Activated B cell treated with CpG ODN at 0.5 μM for 24 hours (primary cell): ENCODE measurements at regions of chr10 and their contacts with region 1.

Region 1: DNA sequence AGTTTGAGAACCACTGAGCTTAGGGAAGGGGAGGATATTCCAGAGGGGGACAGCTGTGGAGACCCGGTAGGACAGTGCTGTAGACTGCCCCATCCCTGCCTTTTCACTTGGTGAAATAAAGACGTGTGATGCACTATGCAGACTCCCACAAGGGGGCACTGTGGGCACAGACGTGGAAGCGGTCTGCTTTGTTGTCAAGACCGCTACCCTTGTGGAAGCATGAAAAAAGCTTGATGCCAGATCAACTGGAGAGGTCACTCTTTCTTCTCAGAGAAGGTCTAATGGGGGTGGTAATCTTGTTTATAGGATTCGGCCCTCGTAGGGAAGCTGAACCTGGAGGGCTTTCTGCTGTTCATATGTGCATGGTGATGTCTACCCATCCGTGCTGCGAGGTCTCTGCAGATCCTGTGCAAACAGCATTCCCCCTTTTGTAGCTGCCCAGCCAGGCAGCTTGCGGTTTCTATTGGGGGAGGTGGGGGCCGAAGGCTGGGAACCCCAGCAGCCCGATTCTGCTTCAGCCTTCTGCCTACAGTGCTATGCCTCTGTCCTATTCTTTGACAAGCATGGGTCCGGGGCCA is 13.7 kb downstream of the RPS24 start:
- DNase-seq: peak; percentile 63
- ATAC-seq: peak; percentile 74
- H3K4me3 Mint-ChIP-seq: no peak overlapping the region
- H3K27ac Mint-ChIP-seq: no peak overlapping the region
- H3K4me1 Mint-ChIP-seq: peaks cover 22% of the 10 kb centered on the region
- H3K27me3 Mint-ChIP-seq: no peaks in the 10 kb centered on the region
- CTCF ChIP-seq: peak; percentile 45

Region 2: DNA sequence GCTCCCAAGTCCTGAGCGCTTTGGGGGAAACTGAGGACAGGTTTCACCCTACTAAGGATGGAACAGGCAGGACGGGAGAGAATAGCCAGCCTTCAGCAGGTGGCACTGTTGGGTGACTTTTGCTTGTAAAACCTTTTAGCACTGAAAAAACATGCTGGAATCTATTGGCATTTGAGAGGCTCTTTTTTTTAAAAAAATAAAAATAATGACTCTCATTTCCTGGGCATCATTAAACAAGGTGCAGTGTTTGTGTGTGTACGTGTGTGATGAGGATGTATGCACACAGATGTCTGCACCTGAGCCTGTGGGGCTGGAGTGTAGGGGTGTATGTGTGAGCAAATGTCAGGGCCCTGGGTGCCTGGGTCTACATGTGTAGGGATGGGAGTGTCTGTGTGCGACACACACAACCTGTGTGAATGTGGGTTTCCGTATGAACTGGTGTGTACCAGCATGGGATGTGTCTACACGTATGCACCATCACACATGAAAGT is 164.2 kb after region 1 on chr10:
- CTCF ChIA-PET with region 1: no interaction called
- POLR2A ChIA-PET with region 1: no interaction called
- intact Hi-C with region 1: loop called (anchors 10 kb)
- DNase-seq: no peak
- ATAC-seq: no peak
- H3K4me3 Mint-ChIP-seq: no peak overlapping the region
- H3K27ac Mint-ChIP-seq: no peak overlapping the region
- H3K4me1 Mint-ChIP-seq: no peaks in the 10 kb centered on the region
- H3K27me3 Mint-ChIP-seq: peaks cover 20% of the 10 kb centered on the region
- CTCF ChIP-seq: no peak

Region 3: GRCh38 chr10:78437998-78438906 is 390.8 kb after region 1 on chr10:
- CTCF ChIA-PET with region 1: no interaction called
- POLR2A ChIA-PET with region 1: no interaction called
- intact Hi-C with region 1: loop called (anchors 1 kb)
- DNase-seq: no peak
- ATAC-seq: no peak
- H3K4me3 Mint-ChIP-seq: no peak overlapping the region
- H3K27ac Mint-ChIP-seq: no peak overlapping the region
- H3K4me1 Mint-ChIP-seq: no peaks in the 10 kb centered on the region
- H3K27me3 Mint-ChIP-seq: peaks cover 18% of the 10 kb centered on the region
- CTCF ChIP-seq: no peak

Region 4: DNA sequence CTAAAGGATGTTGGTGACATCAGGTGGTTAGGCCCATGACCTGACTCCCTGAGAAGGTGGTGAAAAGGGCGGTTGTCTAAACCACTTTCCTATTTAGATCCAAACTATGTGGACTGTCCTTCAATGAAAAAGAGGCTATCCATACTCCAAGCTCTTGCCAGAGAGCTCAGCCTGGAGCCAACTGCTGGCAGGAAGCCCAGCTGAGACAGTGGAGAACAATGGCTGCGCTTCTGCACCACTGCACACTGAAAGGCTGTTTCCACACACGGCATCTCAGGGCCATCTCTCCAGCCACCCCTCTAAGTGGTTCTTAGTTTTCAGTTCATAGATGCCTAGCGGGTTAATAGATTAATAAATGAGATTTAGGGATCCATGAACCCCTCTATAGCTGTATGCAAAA is 532.6 kb after region 1 on chr10:
- CTCF ChIA-PET with region 1: no interaction called
- POLR2A ChIA-PET with region 1: no interaction called
- intact Hi-C with region 1: loop called (anchors 2 kb)
- DNase-seq: no peak
- ATAC-seq: no peak
- H3K4me3 Mint-ChIP-seq: no peak overlapping the region
- H3K27ac Mint-ChIP-seq: no peak overlapping the region
- H3K4me1 Mint-ChIP-seq: peaks cover 18% of the 10 kb centered on the region
- H3K27me3 Mint-ChIP-seq: no peaks in the 10 kb centered on the region
- CTCF ChIP-seq: no peak

Region 5: GRCh38 chr10:78657163-78657861 is 609.9 kb after region 1 on chr10:
- CTCF ChIA-PET with region 1: interaction called, 11 read pairs
- POLR2A ChIA-PET with region 1: no interaction called
- intact Hi-C with region 1: loop called (anchors 1 kb)
- DNase-seq: peak; percentile 33
- ATAC-seq: no peak
- H3K4me3 Mint-ChIP-seq: no peak overlapping the region
- H3K27ac Mint-ChIP-seq: no peak overlapping the region
- H3K4me1 Mint-ChIP-seq: peaks cover 16% of the 10 kb centered on the region
- H3K27me3 Mint-ChIP-seq: peaks cover 11% of the 10 kb centered on the region
- CTCF ChIP-seq: no peak

Region 6: DNA sequence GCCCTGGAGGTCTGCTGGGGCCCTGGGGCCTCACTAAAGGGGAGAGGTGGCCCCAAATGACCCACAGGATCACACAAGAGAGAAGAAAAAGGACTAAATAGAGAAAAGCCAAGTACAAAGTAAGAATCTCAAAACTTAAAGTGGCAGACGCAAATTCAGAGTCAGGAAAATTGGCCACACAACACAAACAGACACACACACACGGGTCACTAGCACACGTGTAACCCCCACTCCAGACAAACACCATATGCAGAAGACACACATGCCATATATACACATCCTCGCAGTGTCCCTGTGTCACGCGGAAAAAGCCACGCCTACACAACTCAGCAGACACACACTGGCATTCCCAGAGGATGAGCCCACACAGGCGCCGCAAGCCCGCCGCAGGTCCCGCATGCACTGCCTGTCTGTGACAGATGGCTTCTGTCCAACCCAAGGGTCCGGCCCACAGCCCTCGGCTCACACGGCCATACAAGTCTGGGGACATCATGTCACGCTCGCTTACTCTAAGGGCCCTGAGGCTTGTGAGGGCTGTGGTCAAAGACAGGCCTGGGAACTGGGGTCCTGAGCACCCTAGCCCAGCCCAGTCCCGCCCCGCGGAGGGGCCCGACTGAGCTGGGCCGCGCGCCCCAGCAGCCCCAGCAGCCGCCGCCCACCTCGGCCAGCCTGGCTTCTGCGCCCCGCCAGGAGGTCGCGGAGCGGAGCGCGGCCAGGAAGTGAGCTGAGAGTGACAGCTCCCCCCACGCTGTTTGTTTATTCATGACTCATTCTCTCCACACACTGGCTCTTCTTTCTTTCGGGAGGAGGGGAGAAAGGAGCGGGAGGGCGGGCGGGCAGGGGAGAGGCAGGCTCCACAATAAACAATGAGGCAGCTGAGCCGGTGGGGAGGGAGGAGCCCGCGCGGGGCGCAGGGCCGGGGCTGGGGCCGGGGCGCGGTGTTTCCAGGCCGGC is 925.8 kb after region 1 on chr10:
- CTCF ChIA-PET with region 1: no interaction called
- POLR2A ChIA-PET with region 1: no interaction called
- intact Hi-C with region 1: loop called (anchors 10 kb)
- DNase-seq: peak; percentile 41
- ATAC-seq: peak; percentile 61
- H3K4me3 Mint-ChIP-seq: peak overlapping the region; percentile 73
- H3K27ac Mint-ChIP-seq: no peak overlapping the region
- H3K4me1 Mint-ChIP-seq: peaks cover 14% of the 10 kb centered on the region
- H3K27me3 Mint-ChIP-seq: peaks cover 52% of the 10 kb centered on the region
- CTCF ChIP-seq: no peak